ENCODE measurements at regions of chr13 and their contacts with region 1.

Region 1: GRCh38 chr13:59677966-59678814 is 485.5 kb downstream of the DIAPH3 start:
- DNase-seq: no peak
- ATAC-seq: peak; percentile 78 to 89
- H3K4me3 ChIP-seq: no peak overlapping the region
- H3K27ac ChIP-seq: no peak overlapping the region
- H3K4me1 ChIP-seq: peaks cover 2% of the 10 kb centered on the region
- H3K27me3 ChIP-seq: no peaks in the 10 kb centered on the region

Region 2: GRCh38 chr13:59391696-59392095 is 286.5 kb before region 1 on chr13:
- intact Hi-C with region 1: loop called in 3 of 4 experiments (anchors 5 to 10 kb)
- DNase-seq: no peak
- ATAC-seq: peak; percentile 72 to 85
- H3K4me3 ChIP-seq: no peak overlapping the region
- H3K27ac ChIP-seq: no peak overlapping the region
- H3K4me1 ChIP-seq: no peaks in the 10 kb centered on the region
- H3K27me3 ChIP-seq: no peaks in the 10 kb centered on the region

Region 3: DNA sequence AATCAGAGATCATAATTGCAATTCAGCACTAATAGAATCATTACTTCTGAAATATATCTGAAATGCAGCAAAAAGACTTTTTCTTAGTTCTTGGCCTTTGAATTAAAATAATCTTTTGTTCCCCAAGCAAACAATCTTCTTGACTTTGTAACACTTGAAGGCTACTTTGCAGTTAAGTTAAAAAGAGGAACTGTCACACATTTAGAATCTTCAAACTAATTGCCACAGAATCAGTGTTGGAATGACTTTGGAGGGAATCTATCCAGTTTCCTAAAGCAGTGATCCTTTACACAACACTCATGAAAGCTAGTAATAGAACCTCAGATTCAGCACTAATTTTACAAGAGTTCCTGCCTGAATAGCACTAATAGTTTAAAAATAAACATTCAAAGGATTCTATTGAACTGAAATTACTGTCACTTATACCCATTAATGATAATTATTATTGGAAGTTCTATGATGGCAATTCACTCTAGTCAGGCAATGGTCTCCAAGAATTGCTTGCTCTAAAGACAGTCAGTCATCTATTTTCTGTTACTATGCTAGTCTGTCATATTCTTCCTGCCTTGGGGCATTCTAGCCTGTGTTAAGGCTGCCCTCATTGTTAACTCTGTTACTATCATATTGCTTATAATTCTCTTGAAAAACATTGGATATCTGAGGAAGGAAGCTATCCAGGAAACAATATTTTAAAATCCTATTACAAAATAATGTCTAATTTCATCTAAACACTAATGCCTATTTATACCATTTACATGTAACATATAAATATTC is 123.1 kb after region 1 on chr13:
- intact Hi-C with region 1: no loop called
- DNase-seq: no peak
- ATAC-seq: no peak
- H3K4me3 ChIP-seq: no peak overlapping the region
- H3K27ac ChIP-seq: no peak overlapping the region
- H3K4me1 ChIP-seq: no peaks in the 10 kb centered on the region
- H3K27me3 ChIP-seq: no peaks in the 10 kb centered on the region

Measured in right cardiac atrium (tissue), 5 donors.